Caco-2 (cell line): ENCODE measurements at regions of chr18 and their contacts with region 1.

Region 1: DNA sequence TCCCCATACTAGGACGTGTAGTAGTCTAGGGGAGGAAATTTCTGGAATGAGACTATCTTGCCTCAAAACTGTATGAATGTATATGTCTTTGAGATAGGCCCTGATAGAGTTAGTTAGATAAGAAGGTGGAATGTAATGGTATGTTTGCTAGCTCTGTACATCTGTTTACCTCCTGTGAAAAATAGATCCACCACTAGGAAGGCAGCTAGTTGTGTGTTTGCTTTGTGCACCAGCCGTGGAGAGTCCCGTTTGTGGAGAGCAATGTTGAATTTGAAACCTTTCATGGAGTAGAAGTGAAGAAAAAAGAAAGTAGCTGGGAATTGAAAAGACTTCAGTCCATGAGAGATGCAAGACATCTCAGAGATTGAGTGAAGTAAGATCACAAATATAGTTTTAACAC is 25.4 kb downstream of the ASXL3 start:
- DNase-seq: peak; percentile 21 to 31
- H3K4me3 ChIP-seq: no peak overlapping the region
- H3K4me3 Mint-ChIP-seq: peak overlapping the region; percentile 62
- H3K27ac Mint-ChIP-seq: peak overlapping the region; percentile 26
- H3K4me1 ChIP-seq: peaks cover 16% of the 10 kb centered on the region; the same call in 1 of the 2 replicates
- H3K4me1 Mint-ChIP-seq: peaks cover 24% of the 10 kb centered on the region
- H3K27me3 ChIP-seq: no peaks in the 10 kb centered on the region
- H3K27me3 Mint-ChIP-seq: no peaks in the 10 kb centered on the region
- CTCF ChIP-seq: no peak

Region 2: DNA sequence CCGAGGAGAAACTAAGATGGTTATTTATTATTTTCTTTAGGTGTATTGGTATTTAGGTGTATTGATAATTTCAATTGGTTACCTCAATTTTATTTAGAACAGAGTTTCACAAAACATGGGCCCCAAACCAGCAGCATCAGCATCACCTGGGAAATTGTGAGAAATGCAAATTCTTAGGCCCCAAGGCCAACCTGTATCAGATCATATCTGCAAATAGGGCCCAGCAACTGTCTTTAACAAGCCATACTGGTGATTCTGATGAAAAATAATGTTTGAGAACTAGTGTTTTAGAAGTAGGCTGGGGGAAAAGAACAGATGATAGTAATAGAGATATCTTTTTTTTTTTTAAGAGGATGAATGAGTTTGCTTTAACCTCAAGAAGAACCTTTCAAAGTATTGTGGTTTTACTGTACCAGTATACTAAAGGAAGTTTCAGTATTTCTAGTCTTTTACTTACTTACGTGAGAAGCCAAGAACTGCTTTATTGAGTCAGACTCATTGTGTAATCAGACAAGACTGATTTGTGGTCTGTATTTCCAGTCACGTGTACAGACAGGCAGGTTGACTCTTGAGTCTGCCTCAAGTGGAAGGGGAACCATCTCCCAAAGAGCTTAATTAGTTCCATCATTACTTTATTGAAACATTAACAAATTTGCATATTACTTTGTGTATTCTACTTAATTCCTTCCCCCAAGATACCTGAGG is 1072.3 kb before region 1 on chr18:
- CTCF ChIA-PET with region 1: no interaction called
- POLR2A ChIA-PET with region 1: no interaction called
- intact Hi-C with region 1: no loop called
- DNase-seq: no peak
- H3K4me3 ChIP-seq: no peak overlapping the region
- H3K4me3 Mint-ChIP-seq: no peak overlapping the region
- H3K27ac Mint-ChIP-seq: no peak overlapping the region
- H3K4me1 ChIP-seq: no peaks in the 10 kb centered on the region
- H3K4me1 Mint-ChIP-seq: no peaks in the 10 kb centered on the region
- H3K27me3 ChIP-seq: no peaks in the 10 kb centered on the region
- H3K27me3 Mint-ChIP-seq: peaks cover 2% of the 10 kb centered on the region
- CTCF ChIP-seq: no peak

Region 3: GRCh38 chr18:33560686-33561370 is 42.6 kb before region 1 on chr18:
- CTCF ChIA-PET with region 1: no interaction called
- POLR2A ChIA-PET with region 1: no interaction called
- intact Hi-C with region 1: loop called (anchors 1 kb)
- DNase-seq: peak; percentile 7 to 38
- H3K4me3 ChIP-seq: no peak overlapping the region
- H3K4me3 Mint-ChIP-seq: no peak overlapping the region
- H3K27ac Mint-ChIP-seq: peak overlapping the region; percentile 84
- H3K4me1 ChIP-seq: no peaks in the 10 kb centered on the region
- H3K4me1 Mint-ChIP-seq: no peaks in the 10 kb centered on the region
- H3K27me3 ChIP-seq: no peaks in the 10 kb centered on the region
- H3K27me3 Mint-ChIP-seq: no peaks in the 10 kb centered on the region
- CTCF ChIP-seq: no peak

Region 4: DNA sequence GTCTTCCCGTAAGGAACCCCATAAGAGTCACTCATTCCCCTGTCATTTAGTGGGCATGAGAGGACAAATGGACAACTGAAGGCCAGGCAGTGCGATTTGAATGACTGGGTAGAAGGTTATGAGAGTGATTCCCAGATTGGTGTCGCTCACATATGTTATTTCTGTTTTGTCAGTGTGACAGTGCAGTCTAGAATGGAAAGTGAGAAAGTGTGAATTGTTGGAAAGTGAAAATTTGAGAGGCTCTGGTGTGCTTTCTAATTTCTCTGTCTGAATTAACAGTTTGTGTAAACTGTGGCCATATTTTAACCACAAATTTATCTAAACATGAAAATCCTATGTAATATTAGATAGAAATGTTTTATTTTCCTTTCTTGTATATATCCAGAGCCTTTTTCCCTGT is 23.7 kb after region 1 on chr18:
- CTCF ChIA-PET with region 1: no interaction called
- POLR2A ChIA-PET with region 1: no interaction called
- intact Hi-C with region 1: no loop called
- DNase-seq: no peak
- H3K4me3 ChIP-seq: no peak overlapping the region
- H3K4me3 Mint-ChIP-seq: no peak overlapping the region
- H3K27ac Mint-ChIP-seq: no peak overlapping the region
- H3K4me1 ChIP-seq: no peaks in the 10 kb centered on the region
- H3K4me1 Mint-ChIP-seq: no peaks in the 10 kb centered on the region
- H3K27me3 ChIP-seq: no peaks in the 10 kb centered on the region
- H3K27me3 Mint-ChIP-seq: no peaks in the 10 kb centered on the region
- CTCF ChIP-seq: no peak

Region 5: GRCh38 chr18:33937270-33937816 is 333.9 kb after region 1 on chr18:
- CTCF ChIA-PET with region 1: no interaction called
- POLR2A ChIA-PET with region 1: no interaction called
- intact Hi-C with region 1: no loop called
- DNase-seq: no peak
- H3K4me3 ChIP-seq: no peak overlapping the region
- H3K4me3 Mint-ChIP-seq: no peak overlapping the region
- H3K27ac Mint-ChIP-seq: no peak overlapping the region
- H3K4me1 ChIP-seq: no peaks in the 10 kb centered on the region
- H3K4me1 Mint-ChIP-seq: no peaks in the 10 kb centered on the region
- H3K27me3 ChIP-seq: no peaks in the 10 kb centered on the region
- H3K27me3 Mint-ChIP-seq: no peaks in the 10 kb centered on the region
- CTCF ChIP-seq: no peak